Endothelial cell of umbilical vein (primary cell): ENCODE measurements at regions of chr20 and their contacts with region 1.

Region 1: DNA sequence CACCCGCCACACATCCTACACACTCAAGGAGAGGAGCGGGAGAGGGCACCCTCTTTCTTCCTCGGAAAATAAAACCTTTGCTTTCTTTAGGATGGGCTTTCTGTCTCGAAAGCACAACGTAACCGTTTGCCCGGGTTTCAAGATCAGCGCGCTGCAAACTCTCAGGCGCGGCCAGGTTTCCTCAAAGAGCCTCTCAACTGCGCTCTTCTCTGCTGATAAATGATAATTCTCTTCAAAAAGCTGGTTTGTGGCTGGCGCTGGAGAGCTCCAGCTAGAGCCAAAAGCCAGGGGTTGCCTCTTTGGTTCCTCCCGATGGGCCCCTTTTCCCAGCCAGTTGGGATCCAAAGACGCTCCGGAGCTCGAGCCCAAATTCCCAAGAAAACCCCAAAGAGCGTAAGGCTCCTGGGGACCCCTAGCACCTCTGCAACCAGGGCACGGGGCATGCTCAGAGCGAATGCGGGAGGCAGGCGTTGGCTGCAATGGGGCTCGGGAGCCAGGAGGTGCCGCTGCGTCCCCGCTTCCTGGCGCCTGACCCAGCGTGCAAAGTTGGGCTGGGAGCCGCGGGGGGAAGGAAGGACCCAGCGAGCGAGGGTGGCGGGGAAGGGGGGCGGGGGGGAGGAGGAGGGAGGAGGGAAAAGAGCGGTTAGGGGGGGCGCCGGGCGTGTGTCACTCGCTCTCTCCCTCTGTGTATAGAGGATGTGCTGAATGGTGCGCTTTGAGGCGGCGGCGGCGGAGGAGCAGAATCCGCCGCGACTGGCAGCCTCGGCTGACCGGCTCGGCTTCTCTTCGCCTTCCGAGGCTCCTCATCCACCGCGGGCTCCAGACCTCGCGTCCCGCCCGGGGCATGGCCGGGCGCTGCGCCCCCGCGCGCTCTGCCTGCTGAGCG is at the start of gene PLCB1:
- DNase-seq: peak; percentile 79
- H3K4me3 ChIP-seq: peak within 1 kb of the TSS; percentile 65 to 92 (median 83)
- H3K27ac ChIP-seq: peak within 1 kb of the TSS; percentile 37
- H3K4me1 ChIP-seq: peaks cover 12% of the 10 kb centered on the region
- H3K27me3 ChIP-seq: no peaks in the 10 kb centered on the region
- CTCF ChIP-seq: peak; percentile 88 to 93
- POLR2A ChIP-seq: peak; percentile 39
- total RNA-seq, gene PLCB1: 38.6 and 53.4 TPM in 2 replicates

Region 2: GRCh38 chr20:8043687-8044282 is 88.1 kb before region 1 on chr20:
- CTCF ChIA-PET with region 1: interaction called, 128 read pairs
- POLR2A ChIA-PET with region 1: no interaction called
- dilution Hi-C with region 1: no loop called
- intact Hi-C with region 1: loop called (anchors 1 kb)
- DNase-seq: peak; percentile 56
- H3K4me3 ChIP-seq: no peak overlapping the region
- H3K27ac ChIP-seq: no peak overlapping the region
- H3K4me1 ChIP-seq: peaks cover 24% of the 10 kb centered on the region
- H3K27me3 ChIP-seq: no peaks in the 10 kb centered on the region
- CTCF ChIP-seq: peak; percentile 38 to 50
- POLR2A ChIP-seq: no peak

Region 3: GRCh38 chr20:8151372-8151771 is 19.5 kb after region 1 on chr20:
- CTCF ChIA-PET with region 1: interaction called, 11 read pairs
- POLR2A ChIA-PET with region 1: no interaction called
- dilution Hi-C with region 1: no loop called
- intact Hi-C with region 1: loop called (anchors 2 kb)
- DNase-seq: peak; percentile 92
- H3K4me3 ChIP-seq: peak overlapping the region in 1 of 3 experiments; percentile 46
- H3K27ac ChIP-seq: peak overlapping the region; percentile 71
- H3K4me1 ChIP-seq: peaks cover 98% of the 10 kb centered on the region
- H3K27me3 ChIP-seq: no peaks in the 10 kb centered on the region
- CTCF ChIP-seq: no peak
- POLR2A ChIP-seq: peak; percentile 46

Region 4: DNA sequence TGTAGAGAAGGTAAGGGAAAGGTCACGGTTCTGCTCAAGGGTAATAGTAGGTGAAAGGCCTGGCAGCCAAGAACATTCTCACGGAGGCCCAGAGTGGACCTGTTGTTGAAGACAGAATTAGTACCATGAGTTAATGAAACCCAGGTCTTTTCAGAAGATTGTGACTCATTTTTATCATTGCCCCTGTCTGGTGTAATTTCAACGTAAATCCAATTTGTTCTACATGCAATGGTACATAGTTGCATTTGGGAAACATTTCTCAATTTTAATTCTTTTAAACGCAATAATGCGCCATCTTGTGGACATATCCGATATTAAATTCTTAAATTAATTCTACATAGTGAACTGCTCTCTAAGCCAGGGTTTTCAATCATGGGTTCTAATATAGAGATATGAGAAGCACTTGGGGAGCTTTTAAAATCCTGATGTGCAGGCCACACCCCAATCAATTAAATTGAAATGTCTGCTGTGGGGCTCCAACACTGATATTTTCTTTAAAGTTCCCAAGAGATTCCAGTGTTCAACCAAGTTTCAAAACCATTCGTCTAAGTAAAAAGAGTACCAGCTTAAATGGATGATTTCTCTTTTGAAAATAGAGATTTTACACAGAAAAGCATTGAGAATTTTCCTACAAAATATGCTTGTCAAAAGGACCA is 257.7 kb after region 1 on chr20:
- CTCF ChIA-PET with region 1: interaction called, 43 read pairs
- POLR2A ChIA-PET with region 1: no interaction called
- dilution Hi-C with region 1: no loop called
- intact Hi-C with region 1: loop called (anchors 1 kb)
- DNase-seq: peak; percentile 61
- H3K4me3 ChIP-seq: no peak overlapping the region
- H3K27ac ChIP-seq: no peak overlapping the region
- H3K4me1 ChIP-seq: peaks cover 3% of the 10 kb centered on the region
- H3K27me3 ChIP-seq: no peaks in the 10 kb centered on the region
- CTCF ChIP-seq: peak; percentile 6 to 20
- POLR2A ChIP-seq: no peak

Region 5: GRCh38 chr20:8535403-8536261 is 403.8 kb after region 1 on chr20:
- CTCF ChIA-PET with region 1: interaction called, 8 read pairs
- POLR2A ChIA-PET with region 1: no interaction called
- dilution Hi-C with region 1: no loop called
- intact Hi-C with region 1: loop called (anchors 2 kb)
- DNase-seq: peak; percentile 29
- H3K4me3 ChIP-seq: no peak overlapping the region
- H3K27ac ChIP-seq: no peak overlapping the region
- H3K4me1 ChIP-seq: peaks cover 9% of the 10 kb centered on the region
- H3K27me3 ChIP-seq: no peaks in the 10 kb centered on the region
- CTCF ChIP-seq: peak; percentile 49 to 60
- POLR2A ChIP-seq: no peak